ENCODE measurements at regions of chr12 and their contacts with region 1.

Region 1: DNA sequence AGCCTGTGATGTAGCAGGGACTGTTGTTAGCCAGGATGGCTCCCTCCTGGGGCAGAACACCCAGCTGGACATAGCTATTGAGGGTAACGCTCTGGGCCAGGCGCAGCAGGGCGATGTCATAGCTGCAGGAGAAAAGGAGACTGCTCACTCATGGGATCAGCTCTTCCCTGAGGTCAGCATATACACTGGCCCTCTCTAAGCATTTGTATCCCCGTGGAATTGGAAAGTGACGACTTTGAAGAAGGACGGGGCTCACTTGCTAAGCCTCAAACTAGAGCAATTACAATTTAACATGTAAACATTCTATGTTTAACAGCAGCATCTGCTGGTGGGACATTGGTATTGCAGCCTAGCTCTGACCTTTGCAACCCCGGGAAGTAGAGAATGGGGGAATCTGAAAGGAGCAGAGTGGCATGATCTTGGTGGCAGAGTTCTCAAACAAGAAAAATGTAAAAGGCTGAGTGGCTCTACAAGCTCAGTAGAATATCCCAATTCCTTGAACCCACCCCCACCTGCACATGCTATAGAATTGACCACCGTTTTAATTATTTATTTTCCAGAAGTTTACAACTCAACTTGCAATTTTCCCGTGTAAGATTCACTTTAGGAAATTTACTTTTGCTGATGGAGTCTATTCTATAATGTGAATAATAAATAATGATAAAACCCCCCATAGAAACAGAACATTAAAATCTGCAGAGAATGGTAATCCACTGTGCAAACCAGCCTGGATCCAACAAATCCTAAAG is 5.0 kb downstream of the CELA1 start:
- DNase-seq: peak; percentile 78 to 84
- ATAC-seq: peak; percentile 90 to 92
- H3K4me3 ChIP-seq: no peak overlapping the region
- H3K27ac ChIP-seq: peak overlapping the region; percentile 53 to 70
- H3K4me1 ChIP-seq: peaks cover 10% of the 10 kb centered on the region
- CTCF ChIP-seq: peak; percentile 99
- EP300 ChIP-seq: no peak
- POLR2A ChIP-seq: no peak
- RAD21 ChIP-seq: peak; percentile 99

Region 2: GRCh38 chr12:51238510-51239334 is 102.7 kb before region 1 on chr12 and contains the start of gene DAZAP2:
- CTCF ChIA-PET with region 1: interaction called, 10 read pairs
- POLR2A ChIA-PET with region 1: interaction called, 10 read pairs
- DNase-seq: peak; percentile 94 to 98
- ATAC-seq: peak; percentile 97
- H3K4me3 ChIP-seq: peak within 1 kb of the TSS; percentile 90
- H3K27ac ChIP-seq: peak within 1 kb of the TSS; percentile 99 to 100
- H3K4me1 ChIP-seq: peaks cover 15% of the 10 kb centered on the region
- CTCF ChIP-seq: no peak
- EP300 ChIP-seq: no peak
- POLR2A ChIP-seq: peak; percentile 75
- RAD21 ChIP-seq: 0 out of 5 replicates have a peak, but pooled peaks of 1 of the 2 experiments have one; percentile 15
- polyA plus RNA-seq, gene DAZAP2: 375 and 459 TPM in 2 replicates

Region 3: GRCh38 chr12:51262758-51263177 is 78.7 kb before region 1 on chr12:
- CTCF ChIA-PET with region 1: interaction called, 270 read pairs
- POLR2A ChIA-PET with region 1: interaction called, 4 read pairs
- DNase-seq: peak; percentile 46 to 83
- ATAC-seq: peak; percentile 97 to 99
- H3K4me3 ChIP-seq: 0 out of 3 replicates have a peak overlapping the region, but pooled peaks have one; percentile 12
- H3K27ac ChIP-seq: peak overlapping the region in 1 of 2 experiments; percentile 44; a peak in 3 of 6 replicates
- H3K4me1 ChIP-seq: peaks cover 13% of the 10 kb centered on the region
- CTCF ChIP-seq: peak; percentile 66
- EP300 ChIP-seq: no peak
- POLR2A ChIP-seq: no peak
- RAD21 ChIP-seq: peak; percentile 55 to 62

Region 4: DNA sequence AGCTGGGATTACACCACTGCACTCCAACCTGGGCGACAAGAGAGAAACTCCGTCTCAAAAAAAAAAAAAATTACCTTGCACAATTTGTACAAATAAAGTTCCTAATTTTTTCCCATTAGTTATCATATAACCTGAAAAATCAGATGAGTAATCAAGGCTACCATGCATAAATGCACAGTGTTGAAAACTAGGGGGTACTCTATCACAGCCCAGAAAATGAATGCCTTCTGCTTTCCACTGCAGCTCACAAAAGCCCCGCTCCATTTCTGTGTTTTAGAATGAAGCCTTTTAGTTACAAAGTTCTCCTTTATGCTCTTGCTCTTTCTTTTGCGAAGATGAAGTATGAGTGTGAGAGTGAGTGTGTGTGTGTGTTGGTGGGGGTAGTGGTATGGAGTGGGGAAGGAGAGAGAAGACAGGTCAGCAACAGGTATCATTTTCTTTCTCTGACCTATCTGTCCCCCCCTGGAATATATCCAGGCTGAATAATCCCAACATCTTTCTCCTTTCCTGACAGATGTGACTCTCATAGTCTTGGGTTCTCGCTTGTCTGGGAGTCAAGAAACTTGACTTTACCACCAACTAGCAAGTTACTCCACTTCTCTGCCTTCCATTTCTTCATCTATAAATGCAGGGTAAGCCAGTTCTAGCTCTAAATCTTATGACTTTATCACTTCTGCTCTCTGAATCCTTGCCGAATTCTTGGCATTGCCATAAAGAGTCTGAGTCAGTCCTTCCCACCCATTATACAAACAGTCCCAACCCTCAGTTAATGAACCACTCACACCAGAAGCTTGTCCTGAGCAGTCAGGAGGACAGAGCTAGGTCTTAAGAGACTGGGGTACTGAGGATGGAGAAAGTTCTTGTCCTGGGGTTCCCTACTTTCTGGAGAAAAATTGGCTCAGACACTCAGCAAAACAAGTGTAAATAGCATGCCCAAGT is 33.5 kb before region 1 on chr12:
- CTCF ChIA-PET with region 1: interaction called, 29 read pairs
- POLR2A ChIA-PET with region 1: interaction called, 17 read pairs
- DNase-seq: peak; percentile 89 to 91
- ATAC-seq: peak; percentile 98 to 99
- H3K4me3 ChIP-seq: peak overlapping the region; percentile 5; the same call in 1 of the 3 replicates
- H3K27ac ChIP-seq: peak overlapping the region; percentile 73 to 86
- H3K4me1 ChIP-seq: peaks cover 23% of the 10 kb centered on the region
- CTCF ChIP-seq: no peak
- EP300 ChIP-seq: no peak
- POLR2A ChIP-seq: no peak
- RAD21 ChIP-seq: no peak

Region 5: DNA sequence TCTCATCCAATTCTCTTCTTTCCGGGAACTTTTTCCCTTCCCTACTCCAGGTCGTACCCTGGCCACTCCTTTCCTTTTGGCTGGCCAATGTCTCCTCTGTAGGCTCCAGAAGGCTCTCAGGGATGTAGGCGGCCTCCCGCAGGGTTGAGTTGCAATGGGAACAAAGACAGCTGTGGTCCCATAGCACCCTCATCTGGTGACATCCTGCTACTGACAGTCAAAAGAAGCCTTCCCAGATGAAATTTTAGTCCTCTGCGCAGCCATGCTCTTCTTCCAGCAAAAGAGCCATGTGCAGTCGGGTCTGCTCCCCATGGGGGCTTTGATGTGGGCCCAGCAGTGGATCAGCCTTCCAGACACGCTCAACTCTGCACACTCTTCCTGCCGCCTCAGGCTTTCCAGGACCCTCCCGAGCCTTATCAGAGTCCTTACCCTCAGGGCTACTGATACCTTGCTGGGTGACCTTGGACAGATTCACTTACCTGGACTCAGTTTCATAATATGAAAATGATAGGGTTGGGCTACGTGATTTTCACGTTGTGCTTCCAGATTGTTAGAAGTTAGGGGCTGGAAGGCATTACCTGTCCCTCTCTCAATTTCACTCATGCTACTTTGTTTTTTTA is 10.6 kb after region 1 on chr12:
- CTCF ChIA-PET with region 1: interaction called, 110 read pairs
- POLR2A ChIA-PET with region 1: no interaction called
- DNase-seq: peak; percentile 46 to 76
- ATAC-seq: peak; percentile 73 to 87
- H3K4me3 ChIP-seq: no peak overlapping the region
- H3K27ac ChIP-seq: 0 out of 6 replicates have a peak overlapping the region, but pooled peaks of 1 of the 2 experiments have one; percentile 29
- H3K4me1 ChIP-seq: no peaks in the 10 kb centered on the region
- CTCF ChIP-seq: peak; percentile 64
- EP300 ChIP-seq: no peak
- POLR2A ChIP-seq: no peak
- RAD21 ChIP-seq: peak; percentile 79 to 90

Region 6: DNA sequence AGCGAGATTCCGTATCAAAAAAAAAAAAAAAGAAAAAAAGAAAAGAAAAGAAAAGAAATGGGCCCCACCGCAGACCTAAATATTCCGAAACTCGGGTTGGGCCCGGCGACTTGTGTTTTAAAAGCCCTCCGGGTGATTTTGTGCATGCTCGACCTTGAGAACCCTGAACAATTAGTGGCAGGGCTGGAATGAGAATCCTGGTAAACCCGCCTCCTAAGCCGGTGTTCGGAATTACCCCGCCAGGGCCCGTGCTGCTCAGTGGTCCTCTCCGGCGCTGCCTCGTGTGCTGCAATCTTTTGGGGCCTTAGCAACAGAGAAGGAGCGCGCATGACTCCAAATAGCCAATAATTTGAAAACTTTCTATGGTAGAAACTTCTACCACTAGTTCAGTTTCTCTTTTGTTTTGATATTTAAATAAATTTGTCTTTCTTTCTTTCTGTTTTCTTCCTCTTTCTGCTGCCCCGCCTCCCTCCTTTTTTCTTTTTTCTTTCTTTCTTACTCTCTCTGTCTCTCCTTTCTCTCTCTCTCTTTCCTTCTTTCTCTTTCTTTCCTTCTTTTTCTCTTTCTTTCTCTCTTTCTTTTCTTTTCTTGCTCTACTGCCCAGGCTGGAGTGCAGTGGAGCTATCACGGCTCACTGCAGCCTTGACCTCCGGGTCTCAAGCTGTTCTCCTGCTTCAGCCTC is 51.3 kb after region 1 on chr12:
- CTCF ChIA-PET with region 1: interaction called, 10 read pairs
- POLR2A ChIA-PET with region 1: no interaction called
- DNase-seq: no peak
- ATAC-seq: no peak
- H3K4me3 ChIP-seq: no peak overlapping the region
- H3K27ac ChIP-seq: no peak overlapping the region
- H3K4me1 ChIP-seq: peaks cover 14% of the 10 kb centered on the region
- CTCF ChIP-seq: no peak
- EP300 ChIP-seq: no peak
- POLR2A ChIP-seq: no peak
- RAD21 ChIP-seq: no peak